ENCODE measurements at regions of chr18 and their contacts with region 1.

Region 1: DNA sequence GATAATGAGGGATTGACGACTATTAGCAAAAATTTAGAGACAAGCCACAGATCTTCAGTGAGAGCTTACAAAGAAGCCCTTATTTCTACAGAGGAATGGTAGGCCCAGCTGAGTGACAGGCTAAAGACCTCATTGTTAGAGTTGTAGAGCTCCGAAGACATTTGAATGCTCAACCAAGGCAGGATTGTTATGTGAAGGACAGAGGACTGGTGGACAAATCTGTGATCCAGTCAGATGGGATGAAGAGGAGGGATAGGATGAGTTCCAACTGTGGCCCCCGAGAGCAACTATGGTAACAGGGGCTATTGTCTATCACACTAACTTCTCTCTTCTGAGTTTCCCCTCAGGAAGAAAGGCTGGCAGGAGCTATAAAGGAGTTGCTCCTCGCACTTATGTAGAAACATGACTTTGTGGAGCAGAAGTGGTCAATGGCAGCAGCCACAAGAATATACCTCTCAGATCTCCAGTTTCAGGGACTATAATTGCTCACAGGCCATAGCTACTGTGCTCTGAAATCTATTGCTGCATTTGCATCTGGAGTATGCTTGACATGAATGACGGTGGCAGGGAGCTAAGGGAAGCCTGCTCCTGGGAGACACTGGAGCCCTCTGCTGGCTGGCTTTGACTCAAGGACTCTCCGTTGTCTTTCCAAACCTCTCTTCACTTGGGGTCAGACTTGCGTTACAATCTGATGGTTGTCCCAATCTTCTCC is 50.3 kb upstream of the GREB1L start:
- DNase-seq: peak; percentile 56
- ATAC-seq: peak; percentile 30
- H3K4me3 Mint-ChIP-seq: no peak overlapping the region
- H3K27ac Mint-ChIP-seq: no peak overlapping the region
- H3K4me1 Mint-ChIP-seq: no peaks in the 10 kb centered on the region
- H3K27me3 Mint-ChIP-seq: peaks cover 8% of the 10 kb centered on the region

Region 2: GRCh38 chr18:21146016-21146415 is 45.7 kb before region 1 on chr18:
- CTCF ChIA-PET with region 1: interaction called, 3 read pairs
- POLR2A ChIA-PET with region 1: no interaction called
- intact Hi-C with region 1: loop called in 1 of 2 experiments (anchors 5 kb)
- DNase-seq: no peak
- ATAC-seq: no peak
- H3K4me3 Mint-ChIP-seq: no peak overlapping the region
- H3K27ac Mint-ChIP-seq: no peak overlapping the region
- H3K4me1 Mint-ChIP-seq: no peaks in the 10 kb centered on the region
- H3K27me3 Mint-ChIP-seq: peaks cover 2% of the 10 kb centered on the region

Region 3: DNA sequence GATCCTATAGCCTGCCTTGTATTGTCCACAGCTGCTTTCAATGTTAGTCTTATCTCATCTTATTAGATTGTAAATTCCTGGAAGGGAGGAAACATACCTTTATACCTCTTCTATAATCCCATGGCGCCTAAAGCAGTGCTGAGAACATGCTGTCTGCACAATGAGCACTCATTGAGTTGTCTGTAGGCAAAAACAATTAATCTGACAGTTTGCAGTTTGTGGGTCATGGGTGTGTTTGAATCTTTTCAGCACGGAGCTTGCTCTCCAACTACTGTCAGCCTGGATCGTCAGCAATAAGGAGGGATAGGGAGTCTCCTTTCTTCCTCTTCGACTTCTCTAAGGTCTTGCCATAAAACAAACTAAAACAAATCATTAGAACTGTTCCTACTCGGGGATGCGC is 23.7 kb after region 1 on chr18:
- CTCF ChIA-PET with region 1: interaction called, 12 read pairs
- POLR2A ChIA-PET with region 1: no interaction called
- intact Hi-C with region 1: loop called in 1 of 2 experiments (anchors 2 kb)
- DNase-seq: no peak
- ATAC-seq: no peak
- H3K4me3 Mint-ChIP-seq: no peak overlapping the region
- H3K27ac Mint-ChIP-seq: no peak overlapping the region
- H3K4me1 Mint-ChIP-seq: no peaks in the 10 kb centered on the region
- H3K27me3 Mint-ChIP-seq: no peaks in the 10 kb centered on the region

Region 4: DNA sequence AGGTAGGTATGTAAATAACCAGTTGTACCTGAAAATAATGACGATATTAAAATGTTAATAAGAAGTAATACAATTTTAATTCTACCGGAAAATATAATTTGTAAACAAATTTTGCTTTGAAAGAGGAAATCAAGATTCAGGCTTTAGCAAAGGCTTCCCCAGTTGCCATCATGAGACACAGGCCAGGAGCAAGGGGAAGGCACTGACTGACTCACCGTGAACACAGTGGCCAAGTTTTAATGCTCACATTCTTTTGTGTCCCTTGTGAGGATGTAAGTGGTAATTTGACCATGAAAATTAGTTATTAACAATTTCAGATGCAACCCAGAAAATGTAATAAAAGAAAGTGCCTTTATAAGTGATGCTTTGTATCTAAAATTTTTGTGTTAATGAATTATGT is 214.4 kb after region 1 on chr18:
- CTCF ChIA-PET with region 1: no interaction called
- POLR2A ChIA-PET with region 1: no interaction called
- intact Hi-C with region 1: loop called in 1 of 2 experiments (anchors 10 kb)
- DNase-seq: no peak
- ATAC-seq: no peak
- H3K4me3 Mint-ChIP-seq: no peak overlapping the region
- H3K27ac Mint-ChIP-seq: no peak overlapping the region
- H3K4me1 Mint-ChIP-seq: no peaks in the 10 kb centered on the region
- H3K27me3 Mint-ChIP-seq: peaks cover 4% of the 10 kb centered on the region

Region 5: DNA sequence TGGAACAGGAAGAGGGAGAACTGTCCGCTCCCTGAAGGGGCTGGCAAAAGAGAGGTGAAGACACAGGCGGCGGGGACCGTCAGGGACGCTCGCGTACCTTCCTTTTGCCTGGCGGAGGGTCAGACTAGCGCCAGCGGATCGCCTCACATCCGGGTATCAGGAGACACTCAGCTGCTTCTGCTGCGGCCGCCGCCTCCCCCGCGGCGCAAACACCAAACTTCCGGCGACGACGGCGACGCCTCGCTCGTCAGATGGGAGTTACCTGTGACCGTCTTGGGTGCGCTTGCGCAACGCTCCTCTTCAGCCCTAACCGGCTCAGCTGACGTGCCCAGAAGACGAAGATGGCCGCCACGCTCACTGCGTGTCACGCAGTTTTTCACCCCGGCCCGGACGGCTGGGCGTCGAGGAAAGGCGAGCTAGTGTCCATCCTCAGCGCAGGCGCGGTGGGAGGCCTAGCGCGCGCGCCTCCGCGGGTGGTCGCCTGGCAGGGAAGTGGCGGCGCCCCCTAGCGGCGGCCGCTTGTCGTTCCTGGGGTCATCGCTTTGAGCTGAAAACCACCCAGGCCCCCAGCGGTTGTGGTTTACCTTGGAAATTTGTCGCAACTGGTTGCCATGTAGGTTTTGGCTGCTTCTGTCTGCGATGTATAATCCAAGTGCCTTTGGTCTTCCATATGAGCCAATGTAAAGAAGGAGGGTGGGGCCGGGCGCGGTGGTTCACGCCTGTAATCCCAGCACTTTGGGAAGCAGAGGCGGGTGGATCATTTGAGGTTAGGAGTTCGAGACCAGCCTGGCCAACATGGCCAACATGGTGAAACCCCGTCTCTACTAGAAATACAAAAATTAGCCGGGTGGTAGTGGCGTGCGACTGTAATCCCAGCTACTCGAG is 409.0 kb after region 1 on chr18 and contains the start of gene ESCO1:
- CTCF ChIA-PET with region 1: interaction called, 4 read pairs
- POLR2A ChIA-PET with region 1: interaction called, 5 read pairs
- intact Hi-C with region 1: loop called in 1 of 2 experiments (anchors 10 kb)
- DNase-seq: peak; percentile 97
- ATAC-seq: peak; percentile 91
- H3K4me3 Mint-ChIP-seq: peak within 1 kb of the TSS; percentile 97
- H3K27ac Mint-ChIP-seq: peak within 1 kb of the TSS; percentile 94
- H3K4me1 Mint-ChIP-seq: peaks cover 41% of the 10 kb centered on the region
- H3K27me3 Mint-ChIP-seq: no peaks in the 10 kb centered on the region
- total RNA-seq, gene ESCO1: 21.7 to 26.5 TPM

Region 6: DNA sequence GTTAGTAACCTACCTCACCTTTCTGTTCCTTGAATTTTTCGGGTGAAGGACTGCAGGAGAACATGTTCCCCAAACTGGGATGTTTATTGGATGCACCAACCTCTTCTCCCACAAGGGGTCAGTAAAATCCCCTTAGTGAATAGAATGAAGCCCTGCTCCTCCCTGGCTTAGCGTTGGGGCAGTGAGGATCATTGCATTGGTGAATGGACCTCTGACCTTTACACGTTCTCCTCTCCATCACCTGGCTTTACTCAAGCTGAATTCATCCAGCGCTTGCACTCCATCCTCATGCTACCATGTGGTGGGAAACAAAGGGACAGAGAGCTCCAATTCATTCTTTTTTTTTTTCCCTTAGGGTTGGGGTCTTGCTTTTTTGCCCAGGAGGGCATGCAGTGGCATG is 706.1 kb after region 1 on chr18:
- CTCF ChIA-PET with region 1: no interaction called
- POLR2A ChIA-PET with region 1: no interaction called
- intact Hi-C with region 1: loop called in 1 of 2 experiments (anchors 10 kb)
- DNase-seq: peak; percentile 36
- ATAC-seq: no peak
- H3K4me3 Mint-ChIP-seq: no peak overlapping the region
- H3K27ac Mint-ChIP-seq: no peak overlapping the region
- H3K4me1 Mint-ChIP-seq: peaks cover 4% of the 10 kb centered on the region
- H3K27me3 Mint-ChIP-seq: peaks cover 13% of the 10 kb centered on the region

Measured in activated CD4-positive, alpha-beta T cell treated with anti-CD3 and anti-CD28 coated beads for 36 hours (primary cell).